Sigmoid colon (tissue), 7 donors: ENCODE measurements at regions of chr17 and their contacts with region 1.

Region 1: GRCh38 chr17:17001874-17002520 is 30.1 kb upstream of the TNFRSF13B start:
- DNase-seq: peak; percentile 89
- H3K4me3 ChIP-seq: no peak overlapping the region
- H3K27ac ChIP-seq: no peak overlapping the region
- H3K4me1 ChIP-seq: peaks cover 0 to 10% (median 7%) of the 10 kb centered on the region in 4 donors
- H3K27me3 ChIP-seq: no peaks in the 10 kb centered on the region
- CTCF ChIP-seq: peak; percentile 76 to 96 (median 90)
- EP300 ChIP-seq: no peak
- POLR2A ChIP-seq: no peak

Region 2: DNA sequence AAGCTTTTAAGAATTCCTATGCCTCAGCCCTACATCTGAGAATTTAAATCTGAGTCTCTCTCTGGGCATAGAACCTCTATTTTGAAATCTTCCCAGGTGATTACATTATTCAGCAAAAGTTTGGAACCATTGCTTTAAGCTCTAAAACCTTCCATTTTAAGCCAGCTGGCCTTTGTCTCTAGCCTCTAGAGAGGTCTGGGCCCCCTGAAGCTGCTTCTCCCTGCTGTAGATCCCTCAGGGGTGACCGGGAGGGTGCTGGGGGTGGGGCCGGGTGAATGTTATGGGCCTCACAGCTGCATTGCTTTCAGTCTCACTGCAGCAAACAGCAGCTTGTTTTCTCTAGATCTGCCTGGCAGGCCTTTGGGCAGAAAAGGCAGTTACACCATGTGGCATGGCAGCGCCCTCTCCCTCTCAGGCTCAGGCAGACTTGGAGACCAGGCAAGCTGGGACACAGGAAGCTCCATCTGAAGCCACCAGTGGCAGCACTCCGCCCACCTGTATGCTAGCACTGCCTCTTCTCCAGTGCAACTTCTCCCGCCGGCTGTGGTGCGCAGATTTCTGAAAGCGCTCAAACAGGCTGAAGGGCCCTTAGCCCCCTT is 106.6 kb after region 1 on chr17:
- intact Hi-C with region 1: loop called (anchors 10 kb)
- DNase-seq: no peak
- H3K4me3 ChIP-seq: no peak overlapping the region
- H3K27ac ChIP-seq: peak overlapping the region; percentile 23 to 58 (median 52)
- H3K4me1 ChIP-seq: peaks cover 0 to 67% (median 60%) of the 10 kb centered on the region in 4 donors
- H3K27me3 ChIP-seq: no peaks in the 10 kb centered on the region
- CTCF ChIP-seq: no peak
- EP300 ChIP-seq: no peak
- POLR2A ChIP-seq: no peak

Region 3: DNA sequence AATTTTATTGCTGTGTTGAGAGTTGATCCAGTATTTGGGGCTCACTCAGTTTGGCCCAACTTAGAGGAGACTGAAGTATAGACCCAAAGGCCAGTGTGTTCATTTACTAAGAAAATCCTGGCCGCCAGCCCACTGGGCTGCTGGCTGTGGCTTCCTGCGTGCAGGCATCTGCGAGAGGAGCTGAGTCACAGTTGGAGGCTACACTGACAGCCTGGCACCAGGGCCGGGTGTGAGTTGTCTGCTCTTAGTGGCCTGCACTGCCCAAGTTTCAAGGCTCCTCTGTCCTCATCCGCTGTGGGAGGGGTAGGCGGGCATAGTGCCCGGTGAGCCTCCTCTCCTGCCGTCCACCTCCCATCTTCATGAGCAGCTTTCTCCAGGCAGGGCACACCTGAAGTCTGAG is 150.0 kb after region 1 on chr17:
- intact Hi-C with region 1: loop called (anchors 5 kb)
- DNase-seq: peak; percentile 96
- H3K4me3 ChIP-seq: no peak overlapping the region
- H3K27ac ChIP-seq: peak overlapping the region; percentile 73 to 84 (median 77)
- H3K4me1 ChIP-seq: peaks cover 0 to 36% (median 24%) of the 10 kb centered on the region in 4 donors
- H3K27me3 ChIP-seq: no peaks in the 10 kb centered on the region
- CTCF ChIP-seq: no peak
- EP300 ChIP-seq: no peak
- POLR2A ChIP-seq: no peak